B cell (primary cell): ENCODE measurements at regions of chr17 and their contacts with region 1.

Region 1: DNA sequence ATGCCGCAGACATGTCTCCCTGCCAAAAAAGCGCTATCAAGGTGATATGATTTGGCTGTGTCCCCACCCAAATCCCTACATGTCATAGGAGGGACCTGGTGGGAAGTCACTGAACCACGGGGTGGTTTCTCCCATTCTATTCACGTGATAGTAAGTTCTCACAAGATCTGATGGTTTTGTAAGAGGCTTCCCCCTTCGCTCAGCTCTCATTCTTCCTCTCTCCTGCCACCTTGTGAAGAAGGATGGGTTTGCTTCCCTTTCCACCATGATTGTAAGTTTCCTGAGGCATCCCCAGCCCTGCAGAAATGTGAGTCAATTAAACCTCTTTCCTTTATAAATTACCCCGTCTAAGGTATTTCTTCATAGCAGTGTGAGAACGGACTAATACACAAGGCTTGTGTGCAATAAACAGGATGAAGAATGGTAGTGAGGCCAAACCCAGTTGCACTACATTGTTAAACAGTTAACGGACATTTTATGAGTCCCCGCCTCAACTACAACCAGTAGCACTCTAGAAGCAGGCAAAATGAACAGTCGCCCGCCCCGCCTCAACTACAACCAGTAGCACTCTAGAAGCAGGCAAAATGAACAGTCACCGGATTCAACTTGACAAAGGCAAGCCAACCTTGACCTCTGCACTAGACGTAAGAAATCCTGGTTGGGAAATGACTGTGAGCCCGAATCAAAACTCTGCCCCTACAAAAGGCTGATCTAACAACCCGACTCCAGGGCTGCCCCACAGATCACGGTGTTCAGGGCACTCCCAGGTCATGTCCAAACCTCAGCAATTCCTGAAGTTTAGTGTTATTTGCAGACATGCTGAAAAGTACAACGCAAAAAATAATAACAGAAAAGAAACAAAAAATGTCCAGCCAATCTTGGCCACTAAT is 26.3 kb downstream of the VPS53 start:
- DNase-seq: peak; percentile 28
- ATAC-seq: no peak
- H3K4me3 ChIP-seq: no peak overlapping the region
- H3K4me3 Mint-ChIP-seq: no peak overlapping the region
- H3K27ac ChIP-seq: no peak overlapping the region
- H3K27ac Mint-ChIP-seq: no peak overlapping the region
- H3K4me1 ChIP-seq: peaks cover 0 to 3% of the 10 kb centered on the region in 2 donors
- H3K4me1 Mint-ChIP-seq: peaks cover 3% of the 10 kb centered on the region
- H3K27me3 ChIP-seq: no peaks in the 10 kb centered on the region
- H3K27me3 Mint-ChIP-seq: no peaks in the 10 kb centered on the region
- CTCF ChIP-seq: no peak

Region 2: DNA sequence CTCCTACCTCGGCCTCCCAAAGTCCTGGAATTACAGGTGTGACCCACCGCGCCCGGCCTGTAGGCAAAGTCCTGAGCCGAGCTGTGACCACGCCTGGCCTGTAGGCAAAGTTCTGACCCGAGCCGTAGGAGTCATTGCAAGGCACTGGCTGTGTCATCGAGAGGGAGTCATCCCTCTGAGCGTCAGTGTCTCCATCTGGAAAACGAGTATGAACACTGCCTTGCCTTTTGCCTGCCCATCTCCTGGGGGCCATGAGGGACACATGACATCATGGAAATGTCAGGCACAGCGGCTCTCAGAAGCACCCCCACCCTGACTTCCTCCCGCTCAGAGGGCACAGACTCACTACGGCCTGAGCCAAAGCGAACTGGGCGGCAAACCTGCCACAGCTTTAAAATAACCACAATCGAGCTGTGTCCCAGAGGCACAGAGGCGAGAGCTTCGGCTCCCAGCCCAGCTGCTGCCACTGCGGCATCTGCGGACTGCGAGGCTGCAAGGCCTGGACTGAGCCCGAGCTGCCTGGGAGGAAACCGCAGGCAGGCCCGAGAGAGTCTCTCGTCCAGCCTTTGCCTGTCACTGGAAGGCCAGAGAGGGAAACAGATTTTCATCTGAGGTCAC is 386.6 kb before region 1 on chr17:
- CTCF ChIA-PET with region 1: no interaction called
- POLR2A ChIA-PET with region 1: no interaction called
- intact Hi-C with region 1: no loop called
- DNase-seq: no peak
- ATAC-seq: no peak
- H3K4me3 ChIP-seq: no peak overlapping the region
- H3K4me3 Mint-ChIP-seq: no peak overlapping the region
- H3K27ac ChIP-seq: no peak overlapping the region
- H3K27ac Mint-ChIP-seq: no peak overlapping the region
- H3K4me1 ChIP-seq: peaks cover 0 to 3% of the 10 kb centered on the region in 2 donors
- H3K4me1 Mint-ChIP-seq: no peaks in the 10 kb centered on the region
- H3K27me3 ChIP-seq: peaks cover 0 to 9% (median 3%) of the 10 kb centered on the region in 4 experiments
- H3K27me3 Mint-ChIP-seq: no peaks in the 10 kb centered on the region
- CTCF ChIP-seq: no peak

Region 3: GRCh38 chr17:409848-410545 is 278.3 kb before region 1 on chr17:
- CTCF ChIA-PET with region 1: interaction called, 13 read pairs
- POLR2A ChIA-PET with region 1: no interaction called
- intact Hi-C with region 1: no loop called
- DNase-seq: peak; percentile 100
- ATAC-seq: peak; percentile 82
- H3K4me3 ChIP-seq: peak overlapping the region; percentile 31 to 92 (median 75)
- H3K4me3 Mint-ChIP-seq: peak overlapping the region; percentile 92
- H3K27ac ChIP-seq: peak overlapping the region; percentile 61 to 88
- H3K27ac Mint-ChIP-seq: peak overlapping the region; percentile 97
- H3K4me1 ChIP-seq: peaks cover 20 to 22% of the 10 kb centered on the region in 2 donors
- H3K4me1 Mint-ChIP-seq: peaks cover 39% of the 10 kb centered on the region
- H3K27me3 ChIP-seq: peaks cover 0 to 6% (median 2%) of the 10 kb centered on the region in 4 experiments
- H3K27me3 Mint-ChIP-seq: peaks cover 9% of the 10 kb centered on the region
- CTCF ChIP-seq: no peak

Region 4: GRCh38 chr17:614653-615473 is 73.5 kb before region 1 on chr17:
- CTCF ChIA-PET with region 1: no interaction called
- POLR2A ChIA-PET with region 1: no interaction called
- intact Hi-C with region 1: no loop called
- DNase-seq: no peak
- ATAC-seq: no peak
- H3K4me3 ChIP-seq: no peak overlapping the region
- H3K4me3 Mint-ChIP-seq: no peak overlapping the region
- H3K27ac ChIP-seq: no peak overlapping the region
- H3K27ac Mint-ChIP-seq: no peak overlapping the region
- H3K4me1 ChIP-seq: no peaks in the 10 kb centered on the region
- H3K4me1 Mint-ChIP-seq: peaks cover 1% of the 10 kb centered on the region
- H3K27me3 ChIP-seq: no peaks in the 10 kb centered on the region
- H3K27me3 Mint-ChIP-seq: no peaks in the 10 kb centered on the region
- CTCF ChIP-seq: no peak